Right ventricle myocardium inferior (tissue), 1 donor: ENCODE measurements at regions of chr19 and their contacts with region 1.

Region 1: DNA sequence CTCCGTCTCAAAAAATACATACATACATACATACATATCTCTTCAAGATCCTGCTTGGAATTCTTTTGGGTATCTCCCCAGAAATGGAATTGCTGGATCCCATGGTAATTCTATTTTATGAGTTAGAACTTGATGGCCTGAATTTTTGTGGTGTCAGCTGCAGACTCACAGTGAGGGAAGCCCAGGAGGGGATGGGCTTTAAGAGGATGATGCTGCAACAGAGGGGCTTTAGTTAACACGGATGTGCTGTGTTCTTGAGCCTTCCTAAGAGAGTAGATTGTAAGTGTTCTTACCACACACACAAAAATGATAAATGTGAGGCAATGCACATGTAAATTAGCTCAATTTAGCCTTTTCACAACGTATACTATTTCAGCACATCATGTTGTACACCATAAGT is 31.8 kb downstream of the CACNG6 start:
- DNase-seq: no peak
- ATAC-seq: no peak

Region 2: GRCh38 chr19:53906211-53907192 is 116.7 kb before region 1 on chr19:
- intact Hi-C with region 1: loop called (anchors 5 kb)
- DNase-seq: peak; percentile 75
- ATAC-seq: no peak

Region 3: GRCh38 chr19:53927739-53928138 is 95.5 kb before region 1 on chr19:
- intact Hi-C with region 1: no loop called
- DNase-seq: no peak
- ATAC-seq: no peak

Region 4: GRCh38 chr19:54137086-54137921 is 114.1 kb after region 1 on chr19 and contains the start of gene CNOT3:
- intact Hi-C with region 1: no loop called
- DNase-seq: peak; percentile 99
- ATAC-seq: peak; percentile 93
- total RNA-seq, gene CNOT3: 17.6 TPM

Region 5: GRCh38 chr19:54257116-54257480 is 233.9 kb after region 1 on chr19 and contains the start of gene LILRB5:
- intact Hi-C with region 1: no loop called
- DNase-seq: no peak
- ATAC-seq: peak; percentile 51
- total RNA-seq, gene LILRB5: 8.5 TPM